Esophagus squamous epithelium (tissue), 5 donors: ENCODE measurements at regions of chr1 and their contacts with region 1.

Region 1: GRCh38 chr1:221435504-221435904 is 306.4 kb downstream of the DUSP10 start:
- DNase-seq: no peak
- H3K4me3 ChIP-seq: no peak overlapping the region
- H3K27ac ChIP-seq: peak overlapping the region in 2 of 4 donors; percentile 18 to 54
- H3K4me1 ChIP-seq: peaks cover 0 to 18% (median 7%) of the 10 kb centered on the region in 3 donors
- H3K27me3 ChIP-seq: no peaks in the 10 kb centered on the region
- CTCF ChIP-seq: peak; percentile 75 to 99 (median 91)
- POLR2A ChIP-seq: no peak

Region 2: GRCh38 chr1:220711056-220711809 is 724.3 kb before region 1 on chr1:
- intact Hi-C with region 1: no loop called
- DNase-seq: no peak
- H3K4me3 ChIP-seq: no peak overlapping the region
- H3K27ac ChIP-seq: no peak overlapping the region
- H3K4me1 ChIP-seq: peaks cover 0 to 12% (median 0%) of the 10 kb centered on the region in 3 donors
- H3K27me3 ChIP-seq: peaks cover 0 to 20% (median 0%) of the 10 kb centered on the region in 4 donors
- CTCF ChIP-seq: no peak
- POLR2A ChIP-seq: no peak

Region 3: DNA sequence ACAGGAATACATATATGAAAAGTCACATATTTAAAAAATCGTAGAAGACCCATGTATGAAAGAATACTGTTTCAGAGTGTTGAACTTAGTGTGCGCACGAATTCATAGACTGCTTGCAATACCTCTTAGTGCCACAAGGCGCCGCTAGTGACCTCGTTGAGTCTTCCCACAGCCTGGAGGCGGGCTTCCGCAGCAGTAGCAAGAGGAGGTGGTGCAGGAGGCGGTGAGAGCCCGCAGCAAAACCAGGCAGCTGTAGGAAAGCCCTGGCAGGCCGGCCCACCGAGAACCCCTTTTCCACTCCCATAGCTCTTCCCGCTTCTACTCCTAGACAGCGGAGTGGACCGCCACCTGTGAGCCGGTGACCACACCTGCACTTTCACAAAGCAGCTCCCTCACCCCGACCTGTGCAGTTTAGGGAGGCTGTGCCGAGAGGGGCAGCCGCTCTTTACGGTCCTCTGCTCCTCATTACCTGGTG is 625.3 kb before region 1 on chr1:
- intact Hi-C with region 1: loop called (anchors 10 kb)
- DNase-seq: peak; percentile 8
- H3K4me3 ChIP-seq: peak overlapping the region in 2 of 4 donors; percentile 23 to 58
- H3K27ac ChIP-seq: no peak overlapping the region
- H3K4me1 ChIP-seq: peaks cover 0 to 7% (median 0%) of the 10 kb centered on the region in 3 donors
- H3K27me3 ChIP-seq: no peaks in the 10 kb centered on the region
- CTCF ChIP-seq: peak; percentile 57 to 95 (median 92)
- POLR2A ChIP-seq: no peak

Region 4: DNA sequence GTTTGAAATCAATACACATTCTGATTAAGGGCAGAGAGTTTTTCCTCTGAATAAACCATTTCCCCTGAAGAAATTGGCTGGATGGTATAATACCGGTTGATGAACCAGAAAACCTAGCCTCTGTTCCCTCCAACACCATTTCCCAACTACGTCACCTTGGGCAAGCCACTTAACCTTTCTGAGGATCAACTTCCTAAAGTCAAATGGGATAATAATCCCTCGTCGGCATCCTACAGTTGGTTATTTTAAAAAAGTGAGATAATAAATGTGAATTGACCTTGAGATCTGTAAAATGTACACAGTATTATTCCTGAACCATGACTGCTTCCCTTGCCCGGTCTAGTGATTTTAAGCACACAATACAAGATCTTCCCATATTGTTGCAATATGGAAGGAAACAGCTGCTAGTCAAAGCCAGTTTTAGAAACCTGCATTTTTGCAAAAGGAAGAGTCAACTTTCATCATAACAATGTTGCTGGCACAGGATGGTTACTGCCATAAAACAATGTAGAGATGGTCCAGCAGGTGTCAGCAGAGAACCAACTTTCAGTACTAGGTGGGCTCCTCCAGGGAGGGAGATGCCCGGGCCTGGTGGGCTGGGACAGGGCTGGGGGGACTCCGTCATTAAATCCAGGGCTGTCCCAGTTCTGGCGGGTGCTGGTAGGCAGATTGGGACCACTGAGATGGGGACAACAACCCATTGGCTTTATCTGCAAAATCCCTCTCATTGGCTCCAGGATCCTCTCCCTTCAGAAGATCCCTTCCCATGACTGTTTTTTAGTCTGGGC is 561.4 kb before region 1 on chr1:
- intact Hi-C with region 1: loop called (anchors 5 kb)
- DNase-seq: no peak
- H3K4me3 ChIP-seq: no peak overlapping the region
- H3K27ac ChIP-seq: no peak overlapping the region
- H3K4me1 ChIP-seq: peaks cover 10 to 32% (median 18%) of the 10 kb centered on the region in 3 donors
- H3K27me3 ChIP-seq: peaks cover 0 to 41% (median 10%) of the 10 kb centered on the region in 4 donors
- CTCF ChIP-seq: peak in 5 of 6 experiments; percentile 41 to 63 (median 49)
- POLR2A ChIP-seq: no peak

Region 5: DNA sequence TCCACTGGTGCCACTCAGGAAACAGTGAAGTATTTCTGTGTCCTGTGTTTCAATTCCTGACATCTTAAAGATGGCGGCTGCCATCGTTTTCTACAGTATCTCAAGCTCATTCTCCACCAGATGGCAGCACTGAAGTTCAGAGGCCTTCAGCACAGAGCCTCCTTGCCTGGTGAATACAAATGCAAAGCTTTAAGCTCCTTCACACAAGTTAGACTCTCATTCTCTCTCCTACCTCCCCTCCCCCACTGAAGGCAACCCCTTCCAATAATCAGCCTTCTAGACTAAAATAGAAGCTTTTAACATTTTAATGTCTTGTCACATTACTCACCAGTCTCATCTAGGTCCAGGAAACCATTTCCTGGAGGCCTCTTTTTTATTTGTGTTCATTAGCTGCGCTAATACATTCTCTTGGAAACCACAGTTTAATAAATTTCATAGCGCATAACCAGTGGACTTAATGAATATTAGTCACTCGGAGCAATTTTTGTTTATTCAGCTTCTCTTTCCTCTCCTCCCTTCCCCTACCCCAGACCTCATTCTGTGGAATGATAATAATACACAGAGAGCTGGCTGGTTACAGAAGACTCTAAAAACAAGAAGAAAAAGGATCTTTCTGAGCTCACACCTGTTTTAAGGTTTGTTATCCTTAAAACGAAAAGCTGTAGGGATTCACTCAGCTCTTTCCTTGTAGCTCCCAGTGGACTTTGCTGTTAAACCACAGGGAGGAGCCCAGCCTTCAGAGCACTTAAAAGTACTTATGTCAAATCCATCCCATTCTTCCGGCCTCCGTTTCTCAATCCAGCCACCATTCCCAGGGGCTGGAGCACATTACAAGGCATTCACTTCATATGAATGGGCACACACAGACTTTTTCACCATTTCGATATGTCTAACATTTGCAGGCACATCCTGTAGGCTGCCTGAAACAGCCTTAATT is 171.4 kb before region 1 on chr1:
- intact Hi-C with region 1: loop called (anchors 5 kb)
- DNase-seq: peak; percentile 3
- H3K4me3 ChIP-seq: no peak overlapping the region
- H3K27ac ChIP-seq: peak overlapping the region in 2 of 4 donors; percentile 4 to 71
- H3K4me1 ChIP-seq: peaks cover 0 to 5% (median 0%) of the 10 kb centered on the region in 3 donors
- H3K27me3 ChIP-seq: no peaks in the 10 kb centered on the region
- CTCF ChIP-seq: peak in 5 of 6 experiments; percentile 33 to 66 (median 56)
- POLR2A ChIP-seq: no peak